ENCODE measurements at regions of chr11 and their contacts with region 1.

Region 1: GRCh38 chr11:777288-778255 is at the start of gene GATD1:
- DNase-seq: peak; percentile 85 to 96 (median 93)
- ATAC-seq: peak; percentile 87
- H3K4me3 ChIP-seq: peak within 1 kb of the TSS; percentile 67
- H3K4me3 Mint-ChIP-seq: peak within 1 kb of the TSS; percentile 90
- H3K27ac ChIP-seq: peak within 1 kb of the TSS in 1 of 2 donors; percentile 56
- H3K27ac Mint-ChIP-seq: peak within 1 kb of the TSS; percentile 77
- H3K4me1 ChIP-seq: peaks cover 48% of the 10 kb centered on the region
- H3K4me1 Mint-ChIP-seq: peaks cover 11% of the 10 kb centered on the region
- H3K27me3 ChIP-seq: no peaks in the 10 kb centered on the region
- H3K27me3 Mint-ChIP-seq: no peaks in the 10 kb centered on the region
- CTCF ChIP-seq: no peak
- total RNA-seq, gene GATD1: 14.7 to 16.1 TPM

Region 2: GRCh38 chr11:809287-810039 is 31.9 kb after region 1 on chr11 and contains the start of gene RPLP2:
- CTCF ChIA-PET with region 1: interaction called, 3 read pairs
- POLR2A ChIA-PET with region 1: interaction called, 3 read pairs
- intact Hi-C with region 1: loop called in 1 of 2 experiments (anchors 1 kb)
- DNase-seq: peak; percentile 93 to 99 (median 97)
- ATAC-seq: peak; percentile 82
- H3K4me3 ChIP-seq: peak within 1 kb of the TSS; percentile 92
- H3K4me3 Mint-ChIP-seq: peak within 1 kb of the TSS; percentile 95
- H3K27ac ChIP-seq: peak within 1 kb of the TSS; percentile 95 to 99
- H3K27ac Mint-ChIP-seq: peak within 1 kb of the TSS; percentile 99
- H3K4me1 ChIP-seq: peaks cover 42% of the 10 kb centered on the region
- H3K4me1 Mint-ChIP-seq: peaks cover 35% of the 10 kb centered on the region
- H3K27me3 ChIP-seq: no peaks in the 10 kb centered on the region
- H3K27me3 Mint-ChIP-seq: no peaks in the 10 kb centered on the region
- CTCF ChIP-seq: no peak
- total RNA-seq, gene RPLP2: 5,234 to 5,390 TPM

Region 3: DNA sequence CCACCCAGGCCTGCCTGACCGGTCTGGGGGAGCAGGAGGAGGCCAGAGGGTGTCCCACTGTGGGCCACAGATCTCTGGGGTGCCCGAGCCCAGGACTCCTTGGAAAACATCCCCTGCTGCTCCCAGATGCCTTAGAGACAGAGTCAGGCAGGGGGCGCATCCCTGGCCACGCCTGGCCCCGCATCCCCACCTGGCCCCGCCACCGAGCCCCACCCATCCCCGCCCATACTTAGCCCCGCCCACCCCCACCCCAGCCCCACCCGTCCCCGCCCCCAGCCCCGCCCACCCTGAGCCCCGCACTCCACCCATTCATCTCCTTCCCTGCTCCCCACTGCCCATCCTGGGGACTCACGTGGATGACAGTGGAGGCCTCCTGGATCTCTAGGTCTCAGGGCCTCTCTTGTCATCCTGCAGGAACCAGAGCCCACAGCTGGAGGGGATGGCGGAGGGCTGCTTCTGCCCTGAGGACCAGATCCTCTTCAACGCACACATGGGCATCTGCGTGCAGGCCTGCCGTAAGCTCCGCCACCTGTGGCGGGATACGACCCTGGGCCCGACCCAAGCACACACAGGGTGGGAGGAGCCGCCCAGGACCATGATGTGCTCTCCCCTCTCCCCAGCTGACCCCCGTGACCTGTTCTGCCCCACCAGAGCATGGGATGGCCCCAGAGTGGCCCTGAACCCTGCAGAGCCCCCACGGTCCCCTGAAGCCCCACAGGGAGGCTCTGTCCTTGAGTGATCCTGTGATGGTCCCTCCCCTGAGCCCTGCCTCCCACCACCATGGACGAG is 478.9 kb after region 1 on chr11:
- CTCF ChIA-PET with region 1: no interaction called
- POLR2A ChIA-PET with region 1: no interaction called
- intact Hi-C with region 1: no loop called
- DNase-seq: no peak
- ATAC-seq: no peak
- H3K4me3 ChIP-seq: no peak overlapping the region
- H3K4me3 Mint-ChIP-seq: no peak overlapping the region
- H3K27ac ChIP-seq: no peak overlapping the region
- H3K27ac Mint-ChIP-seq: no peak overlapping the region
- H3K4me1 ChIP-seq: peaks cover under 1% of the 10 kb centered on the region
- H3K4me1 Mint-ChIP-seq: no peaks in the 10 kb centered on the region
- H3K27me3 ChIP-seq: no peaks in the 10 kb centered on the region
- H3K27me3 Mint-ChIP-seq: no peaks in the 10 kb centered on the region
- CTCF ChIP-seq: no peak